ENCODE measurements at regions of chr16 and their contacts with region 1.

Region 1: GRCh38 chr16:87416826-87417527 is 24.8 kb downstream of the MAP1LC3B start:
- DNase-seq: peak; percentile 69
- H3K4me3 ChIP-seq: no peak overlapping the region
- H3K27ac ChIP-seq: no peak overlapping the region
- H3K4me1 ChIP-seq: no peaks in the 10 kb centered on the region
- H3K27me3 ChIP-seq: no peaks in the 10 kb centered on the region
- CTCF ChIP-seq: peak; percentile 10 to 54 (median 40)
- EP300 ChIP-seq: no peak
- POLR2A ChIP-seq: no peak

Region 2: DNA sequence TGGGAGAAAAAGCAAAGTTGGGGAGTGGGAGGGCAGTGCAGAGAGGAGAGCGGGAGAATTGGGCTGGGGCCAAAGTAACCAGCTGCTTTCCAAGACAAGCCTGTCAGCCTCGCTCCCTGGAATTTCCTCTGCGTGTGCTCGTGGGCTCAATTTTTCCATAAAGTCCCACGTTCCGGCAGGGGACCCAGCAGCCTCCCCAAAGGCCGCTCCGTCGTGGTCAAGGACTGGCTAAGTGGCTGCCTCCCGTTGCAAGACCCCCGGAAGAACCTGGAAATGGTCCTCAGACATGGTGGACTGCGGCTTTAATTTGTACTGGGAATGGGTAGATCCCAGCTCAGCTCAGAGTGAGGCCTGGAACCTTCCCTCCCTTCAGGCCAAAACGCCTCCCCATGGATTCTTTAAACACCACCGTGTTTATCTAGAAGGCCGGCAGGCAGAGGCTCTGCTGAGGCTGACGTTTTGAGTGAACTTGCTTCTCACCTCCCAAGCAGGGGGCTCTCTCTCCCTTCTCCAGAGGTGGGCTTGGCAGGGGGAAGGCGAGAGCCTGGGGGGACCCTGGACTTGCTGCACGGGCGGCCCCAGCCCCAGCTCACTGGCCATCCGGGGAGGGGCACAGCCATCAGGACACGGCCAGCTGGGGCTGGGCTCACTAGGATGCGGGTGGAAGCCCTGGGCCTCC is 289.8 kb before region 1 on chr16:
- intact Hi-C with region 1: no loop called
- DNase-seq: peak; percentile 69
- H3K4me3 ChIP-seq: no peak overlapping the region
- H3K27ac ChIP-seq: peak overlapping the region in 3 of 4 donors; percentile 20 to 44 (median 39)
- H3K4me1 ChIP-seq: peaks cover 0 to 4% (median 0%) of the 10 kb centered on the region in 4 donors
- H3K27me3 ChIP-seq: peaks cover 0 to 13% (median 0%) of the 10 kb centered on the region in 3 donors
- CTCF ChIP-seq: no peak
- EP300 ChIP-seq: no peak
- POLR2A ChIP-seq: no peak

Region 3: DNA sequence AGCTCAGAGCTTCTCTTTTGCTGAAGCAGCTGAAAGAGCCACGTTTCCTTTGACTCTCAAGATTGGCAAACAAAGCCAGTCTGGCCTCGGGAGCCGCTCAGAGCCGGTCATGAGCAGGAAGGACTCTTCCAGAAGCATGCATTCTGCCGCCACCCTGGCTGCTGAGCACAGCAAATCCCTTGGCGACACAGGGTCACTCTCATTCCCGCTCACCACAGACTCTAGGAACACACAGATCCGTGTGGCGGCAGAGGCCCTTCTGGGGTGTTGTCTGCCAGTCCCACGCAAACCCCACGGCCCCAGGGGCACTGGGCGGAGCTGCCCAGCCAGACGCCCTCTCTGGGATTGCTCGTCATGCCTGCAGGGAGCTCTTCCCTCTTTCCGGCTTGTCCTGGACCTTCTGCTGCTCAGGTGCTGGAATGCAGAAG is 256.7 kb before region 1 on chr16:
- intact Hi-C with region 1: no loop called
- DNase-seq: no peak
- H3K4me3 ChIP-seq: no peak overlapping the region
- H3K27ac ChIP-seq: no peak overlapping the region
- H3K4me1 ChIP-seq: no peaks in the 10 kb centered on the region
- H3K27me3 ChIP-seq: peaks cover 0 to 25% (median 0%) of the 10 kb centered on the region in 3 donors
- CTCF ChIP-seq: no peak
- EP300 ChIP-seq: no peak
- POLR2A ChIP-seq: no peak

Region 4: DNA sequence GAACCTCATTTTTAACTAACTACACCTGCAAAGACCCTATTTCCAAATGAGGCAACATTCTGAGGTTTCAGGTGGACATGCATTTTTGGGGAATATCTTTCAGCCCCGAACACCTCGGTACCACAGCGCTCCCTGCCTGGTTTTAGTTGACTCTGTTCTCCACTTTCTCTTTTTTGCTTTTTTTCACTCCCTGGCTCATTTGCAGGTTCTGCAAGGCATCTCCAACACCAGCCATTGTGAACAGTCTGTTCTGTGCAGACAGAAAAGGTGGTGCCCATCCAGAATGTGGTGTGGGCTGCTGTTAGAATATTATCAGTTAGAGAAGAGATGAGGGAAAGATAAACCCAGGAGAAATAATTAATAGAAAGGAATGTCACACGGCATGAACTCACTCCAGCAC is 108.4 kb after region 1 on chr16:
- intact Hi-C with region 1: no loop called
- DNase-seq: no peak
- H3K4me3 ChIP-seq: no peak overlapping the region
- H3K27ac ChIP-seq: no peak overlapping the region
- H3K4me1 ChIP-seq: no peaks in the 10 kb centered on the region
- H3K27me3 ChIP-seq: no peaks in the 10 kb centered on the region
- CTCF ChIP-seq: no peak
- EP300 ChIP-seq: no peak
- POLR2A ChIP-seq: no peak

Region 5: DNA sequence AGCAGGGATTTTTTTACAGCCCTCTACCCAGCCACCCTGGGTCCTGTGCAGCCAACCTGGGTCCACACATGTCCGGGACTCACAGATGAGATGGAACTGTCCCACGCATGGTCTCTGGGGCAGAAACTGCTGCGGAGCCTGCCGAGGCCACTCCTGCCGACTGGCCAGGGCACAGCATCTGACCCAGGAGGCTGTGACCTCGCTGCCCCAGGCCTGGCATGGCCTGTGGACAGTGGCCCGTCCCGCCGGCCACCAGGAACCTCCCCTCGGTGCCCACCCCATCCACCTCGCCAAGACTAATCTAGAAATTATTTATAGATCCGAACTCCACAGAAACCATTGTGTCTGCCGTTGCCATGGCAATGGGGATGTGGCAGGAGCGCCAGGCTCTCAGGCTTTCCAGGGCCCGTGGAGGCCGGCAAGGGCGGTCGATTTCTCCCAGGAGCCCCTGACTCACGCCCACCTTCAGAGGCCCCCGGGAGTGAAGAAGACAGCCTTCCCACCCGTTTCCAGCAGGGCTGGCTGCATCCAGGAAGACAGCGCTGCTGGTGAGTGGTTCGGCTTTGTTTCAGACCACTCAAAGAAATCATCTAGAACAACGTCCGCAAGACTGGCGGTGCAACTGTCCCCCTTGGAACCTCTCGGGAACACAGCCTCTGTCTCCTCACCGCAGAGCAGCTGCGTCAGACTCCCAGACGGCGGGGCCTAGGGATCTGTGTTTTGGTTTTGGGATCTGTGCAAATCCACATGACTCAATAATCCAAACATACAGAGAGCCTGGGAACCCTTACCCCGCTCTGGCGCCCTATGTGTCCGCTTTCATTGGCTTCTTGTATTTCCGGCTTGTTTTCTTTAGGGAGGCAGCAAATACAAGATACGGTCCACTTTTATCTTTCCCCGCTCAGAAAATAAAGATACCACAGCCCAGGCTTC is 124.2 kb after region 1 on chr16:
- intact Hi-C with region 1: loop called (anchors 10 kb)
- DNase-seq: no peak
- H3K4me3 ChIP-seq: peak overlapping the region in 3 of 4 donors; percentile 19 to 33 (median 23)
- H3K27ac ChIP-seq: peak overlapping the region; percentile 34 to 78 (median 50)
- H3K4me1 ChIP-seq: peaks cover 0 to 26% (median 13%) of the 10 kb centered on the region in 4 donors
- H3K27me3 ChIP-seq: peaks cover 4 to 6% (median 4%) of the 10 kb centered on the region in 3 donors
- CTCF ChIP-seq: no peak
- EP300 ChIP-seq: no peak
- POLR2A ChIP-seq: no peak

Region 6: GRCh38 chr16:87790278-87791032 is 373.5 kb after region 1 on chr16:
- intact Hi-C with region 1: no loop called
- DNase-seq: peak; percentile 94
- H3K4me3 ChIP-seq: no peak overlapping the region
- H3K27ac ChIP-seq: peak overlapping the region; percentile 67 to 90 (median 76)
- H3K4me1 ChIP-seq: peaks cover 0 to 42% (median 11%) of the 10 kb centered on the region in 4 donors
- H3K27me3 ChIP-seq: no peaks in the 10 kb centered on the region
- CTCF ChIP-seq: no peak
- EP300 ChIP-seq: peak in 2 of 4 donors; percentile 78 to 81
- POLR2A ChIP-seq: no peak

Measured in sigmoid colon (tissue), 7 donors.